Dorsolateral prefrontal cortex (tissue), 120 donors: ENCODE measurements at regions of chr10 and their contacts with region 1.

Region 1: DNA sequence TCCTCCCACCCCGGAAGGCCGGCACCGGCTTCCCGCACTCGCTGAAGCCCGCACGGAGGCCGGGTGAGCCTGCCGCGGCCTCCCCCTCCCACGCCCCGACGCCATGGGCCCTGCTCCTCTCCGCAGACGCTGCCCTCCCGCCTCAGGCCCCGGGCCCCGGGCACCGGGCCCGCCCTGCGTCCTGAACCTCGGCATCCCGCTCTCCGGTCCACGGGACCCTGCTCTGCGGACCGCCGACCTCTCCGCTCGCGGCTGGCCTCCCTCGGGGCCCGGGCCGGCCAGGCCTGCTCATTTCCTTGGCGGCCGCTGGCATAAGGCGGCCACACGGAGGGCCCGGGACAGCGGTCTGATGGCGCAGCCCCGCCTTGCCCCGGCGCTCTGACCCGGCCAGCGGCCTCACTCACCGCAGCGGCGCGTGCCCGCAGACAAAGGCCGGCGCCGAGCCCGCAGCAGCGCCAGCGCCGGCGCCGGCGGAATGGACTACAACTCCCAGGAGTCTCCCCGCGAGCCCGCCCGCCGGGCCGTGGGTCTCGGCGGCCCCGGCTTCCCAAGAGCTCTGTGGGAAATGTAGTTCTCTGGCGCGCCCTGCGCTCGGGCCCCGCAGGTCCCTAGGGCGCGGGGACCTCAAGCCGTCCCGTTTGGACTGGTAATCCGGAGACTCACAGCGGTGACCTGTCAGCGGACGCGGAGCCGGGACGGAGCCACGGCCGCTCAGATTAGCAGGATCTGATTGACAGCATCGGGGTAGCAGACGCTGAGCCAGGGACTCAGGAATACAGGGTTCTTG is at the start of gene ZNF32:
- DNase-seq: peak; percentile 77 to 94 (median 84)
- H3K4me3 ChIP-seq: peak within 1 kb of the TSS; percentile 66 to 99 (median 89)
- H3K27ac ChIP-seq: peak within 1 kb of the TSS in 58 of 59 donors; percentile 56 to 97 (median 89)
- H3K27me3 ChIP-seq: peaks cover 0 to 5% (median 0%) of the 10 kb centered on the region in 45 donors
- CTCF ChIP-seq: peak in 35 of 56 donors; percentile 3 to 58 (median 31)
- total RNA-seq, gene ZNF32: 30.7 to 64.7 (median 43.9) TPM

Region 2: GRCh38 chr10:43606322-43607198 is 42.0 kb before region 1 on chr10 and contains the start of gene ZNF485:
- intact Hi-C with region 1: loop called (anchors 2 to 5 kb)
- DNase-seq: peak; percentile 70 to 89 (median 76)
- H3K4me3 ChIP-seq: peak within 1 kb of the TSS; percentile 69 to 99 (median 87)
- H3K27ac ChIP-seq: peak within 1 kb of the TSS in 52 of 59 donors; percentile 3 to 89 (median 68)
- H3K27me3 ChIP-seq: no peaks in the 10 kb centered on the region
- CTCF ChIP-seq: peak in 38 of 56 donors; percentile 7 to 59 (median 22)
- total RNA-seq, gene ZNF485: 2.6 to 9.9 (median 5.5) TPM

Region 3: DNA sequence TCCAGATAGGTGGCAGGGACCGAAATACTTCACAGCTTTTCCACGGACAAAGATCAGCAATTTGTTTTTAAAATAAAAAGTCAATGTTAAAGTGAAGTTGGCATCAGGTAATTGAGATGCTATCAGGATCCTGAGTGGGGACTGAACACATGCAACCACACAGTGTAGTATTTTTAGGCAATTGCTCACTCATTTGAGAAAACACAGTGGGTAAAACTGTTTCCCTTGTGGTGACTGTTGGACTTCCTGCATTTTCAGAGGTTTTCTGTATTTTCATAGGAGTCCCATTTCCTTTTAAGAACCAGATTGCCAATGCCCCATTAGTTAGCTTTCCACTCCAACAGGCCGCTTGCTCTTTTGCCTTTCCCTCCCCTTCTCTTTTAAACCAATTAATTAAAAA is 159.5 kb after region 1 on chr10:
- intact Hi-C with region 1: no loop called
- DNase-seq: no peak
- H3K4me3 ChIP-seq: no peak overlapping the region
- H3K27ac ChIP-seq: no peak overlapping the region
- H3K27me3 ChIP-seq: peaks cover 0 to 5% (median 0%) of the 10 kb centered on the region in 45 donors
- CTCF ChIP-seq: no peak